ENCODE measurements at regions of chr14 and their contacts with region 1.

Region 1: DNA sequence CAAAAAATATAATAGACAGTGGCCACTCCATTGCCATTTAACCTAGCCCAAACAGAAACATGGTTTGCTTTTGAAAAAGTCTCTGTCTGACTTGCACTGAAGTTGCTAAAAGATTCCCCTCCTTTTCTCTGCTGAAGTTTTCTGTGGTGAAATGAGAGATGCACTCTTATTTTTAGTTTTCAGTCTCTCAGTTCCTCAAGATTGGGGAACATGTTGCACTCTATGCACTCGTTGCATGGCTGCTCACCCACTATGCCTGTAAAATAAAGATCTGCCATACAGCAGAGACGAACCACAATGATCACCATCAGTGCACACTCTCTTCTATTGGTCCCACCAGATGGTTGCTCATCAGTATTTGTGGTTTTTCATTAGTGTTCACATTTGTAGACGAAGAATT is 13.1 kb upstream of the DAAM1 start:
- DNase-seq: no peak
- ATAC-seq: peak; percentile 99
- H3K4me3 Mint-ChIP-seq: peak overlapping the region; percentile 42
- H3K27ac Mint-ChIP-seq: peak overlapping the region; percentile 24
- H3K4me1 Mint-ChIP-seq: peaks cover 13% of the 10 kb centered on the region
- H3K27me3 Mint-ChIP-seq: peaks cover 5% of the 10 kb centered on the region
- CTCF ChIP-seq: no peak

Region 2: GRCh38 chr14:59046746-59047145 is 128.7 kb before region 1 on chr14:
- CTCF ChIA-PET with region 1: no interaction called
- POLR2A ChIA-PET with region 1: no interaction called
- intact Hi-C with region 1: no loop called
- DNase-seq: no peak
- ATAC-seq: no peak
- H3K4me3 Mint-ChIP-seq: no peak overlapping the region
- H3K27ac Mint-ChIP-seq: no peak overlapping the region
- H3K4me1 Mint-ChIP-seq: no peaks in the 10 kb centered on the region
- H3K27me3 Mint-ChIP-seq: peaks cover 9% of the 10 kb centered on the region
- CTCF ChIP-seq: no peak

Region 3: DNA sequence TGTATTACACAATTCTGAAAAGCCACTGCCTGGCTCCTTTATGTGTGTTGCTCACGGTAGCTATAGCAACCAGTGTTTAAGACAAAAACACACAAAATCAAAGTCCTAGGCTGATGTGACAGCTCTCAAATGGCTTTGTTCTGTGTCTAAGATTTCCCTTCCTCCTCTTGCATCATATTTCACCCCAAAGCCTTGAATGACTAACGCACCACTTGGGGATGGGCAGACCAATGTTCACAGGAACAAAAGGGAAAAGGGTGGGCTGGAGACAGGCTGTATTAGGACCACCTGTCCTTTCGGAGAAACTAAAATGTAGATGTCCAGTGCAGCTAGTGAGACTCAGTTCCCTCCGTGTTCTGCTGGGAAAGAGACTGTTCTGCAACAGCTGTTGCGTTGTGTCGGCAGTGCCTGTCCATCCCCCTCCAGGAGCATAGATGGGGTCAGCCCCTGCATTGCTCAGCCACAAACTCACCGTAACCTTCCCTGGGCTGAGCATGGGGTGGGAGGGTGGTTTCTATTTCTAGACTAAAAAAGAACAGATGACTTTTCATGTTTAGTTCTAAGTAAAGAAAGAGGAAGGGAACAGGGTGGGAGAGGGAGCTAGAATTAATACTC is 13.7 kb before region 1 on chr14:
- CTCF ChIA-PET with region 1: no interaction called
- POLR2A ChIA-PET with region 1: no interaction called
- intact Hi-C with region 1: loop called (anchors 2 kb)
- DNase-seq: no peak
- ATAC-seq: no peak
- H3K4me3 Mint-ChIP-seq: no peak overlapping the region
- H3K27ac Mint-ChIP-seq: no peak overlapping the region
- H3K4me1 Mint-ChIP-seq: no peaks in the 10 kb centered on the region
- H3K27me3 Mint-ChIP-seq: peaks cover 6% of the 10 kb centered on the region
- CTCF ChIP-seq: no peak